Activated T-helper 2 cell treated with anti-CD3 and anti-CD28 coated beads, Interferon-gamma antibody, Interleukin-2, Interleukin-4, amounts not matched to agents 10 μg/mL and 5 μg/mL and 100 μg/mL, durations not matched to agents 14 hours and 24 hours and 36 hours (primary cell): ENCODE measurements at regions of chr6 and their contacts with region 1.

Region 1: GRCh38 chr6:56292505-56293181 is 45.3 kb upstream of the COL21A1 start:
- DNase-seq: no peak
- H3K4me3 Mint-ChIP-seq: no peak overlapping the region
- H3K27ac Mint-ChIP-seq: no peak overlapping the region
- H3K4me1 Mint-ChIP-seq: no peaks in the 10 kb centered on the region
- H3K27me3 Mint-ChIP-seq: no peaks in the 10 kb centered on the region

Region 2: GRCh38 chr6:54717849-54718455 is 1574.7 kb before region 1 on chr6:
- intact Hi-C with region 1: loop called (anchors 5 kb)
- DNase-seq: peak; percentile 18
- H3K4me3 Mint-ChIP-seq: no peak overlapping the region
- H3K27ac Mint-ChIP-seq: no peak overlapping the region
- H3K4me1 Mint-ChIP-seq: no peaks in the 10 kb centered on the region
- H3K27me3 Mint-ChIP-seq: no peaks in the 10 kb centered on the region